Natural killer cell (primary cell): ENCODE measurements at regions of chr6 and their contacts with region 1.

Region 1: GRCh38 chr6:26270903-26271667 is 93.9 kb upstream of the BTN3A2 start:
- DNase-seq: peak; percentile 78 to 92
- ATAC-seq: peak in 2 of 3 donors; percentile 17 to 20
- H3K4me3 ChIP-seq: peak overlapping the region; percentile 62
- H3K4me3 Mint-ChIP-seq: no peak overlapping the region
- H3K27ac ChIP-seq: peak overlapping the region; percentile 92
- H3K27ac Mint-ChIP-seq: no peak overlapping the region
- H3K4me1 ChIP-seq: peaks cover 30% of the 10 kb centered on the region
- H3K4me1 Mint-ChIP-seq: peaks cover 14 to 21% of the 10 kb centered on the region in 2 donors
- H3K27me3 ChIP-seq: no peaks in the 10 kb centered on the region
- H3K27me3 Mint-ChIP-seq: no peaks in the 10 kb centered on the region
- CTCF ChIP-seq: no peak

Region 2: GRCh38 chr6:26103770-26104456 is 167.2 kb before region 1 on chr6:
- intact Hi-C with region 1: loop called (anchors 5 kb)
- DNase-seq: peak; percentile 86 to 95
- ATAC-seq: peak; percentile 87 to 96 (median 88)
- H3K4me3 ChIP-seq: peak overlapping the region; percentile 41
- H3K4me3 Mint-ChIP-seq: peak overlapping the region; percentile 90
- H3K27ac ChIP-seq: peak overlapping the region; percentile 84
- H3K27ac Mint-ChIP-seq: peak overlapping the region; percentile 98 to 99
- H3K4me1 ChIP-seq: peaks cover 10% of the 10 kb centered on the region
- H3K4me1 Mint-ChIP-seq: peaks cover 18% of the 10 kb centered on the region in 2 donors
- H3K27me3 ChIP-seq: no peaks in the 10 kb centered on the region
- H3K27me3 Mint-ChIP-seq: no peaks in the 10 kb centered on the region
- CTCF ChIP-seq: peak; percentile 41

Region 3: GRCh38 chr6:26193467-26194328 is 77.4 kb before region 1 on chr6:
- intact Hi-C with region 1: no loop called
- DNase-seq: no peak
- ATAC-seq: no peak
- H3K4me3 ChIP-seq: no peak overlapping the region
- H3K4me3 Mint-ChIP-seq: peak overlapping the region; percentile 2
- H3K27ac ChIP-seq: no peak overlapping the region
- H3K27ac Mint-ChIP-seq: peak overlapping the region; percentile 98 to 99
- H3K4me1 ChIP-seq: peaks cover 29% of the 10 kb centered on the region
- H3K4me1 Mint-ChIP-seq: peaks cover 37 to 40% of the 10 kb centered on the region in 2 donors
- H3K27me3 ChIP-seq: no peaks in the 10 kb centered on the region
- H3K27me3 Mint-ChIP-seq: no peaks in the 10 kb centered on the region
- CTCF ChIP-seq: no peak

Region 4: GRCh38 chr6:26234421-26235296 is 36.4 kb before region 1 on chr6:
- intact Hi-C with region 1: loop called (anchors 5 kb)
- DNase-seq: peak; percentile 64 to 86
- ATAC-seq: peak; percentile 73 to 84 (median 73)
- H3K4me3 ChIP-seq: peak overlapping the region; percentile 69
- H3K4me3 Mint-ChIP-seq: peak overlapping the region; percentile 91
- H3K27ac ChIP-seq: peak overlapping the region; percentile 92
- H3K27ac Mint-ChIP-seq: peak overlapping the region; percentile 91 to 98
- H3K4me1 ChIP-seq: peaks cover 23% of the 10 kb centered on the region
- H3K4me1 Mint-ChIP-seq: peaks cover 32 to 37% of the 10 kb centered on the region in 2 donors
- H3K27me3 ChIP-seq: no peaks in the 10 kb centered on the region
- H3K27me3 Mint-ChIP-seq: no peaks in the 10 kb centered on the region
- CTCF ChIP-seq: no peak

Region 5: DNA sequence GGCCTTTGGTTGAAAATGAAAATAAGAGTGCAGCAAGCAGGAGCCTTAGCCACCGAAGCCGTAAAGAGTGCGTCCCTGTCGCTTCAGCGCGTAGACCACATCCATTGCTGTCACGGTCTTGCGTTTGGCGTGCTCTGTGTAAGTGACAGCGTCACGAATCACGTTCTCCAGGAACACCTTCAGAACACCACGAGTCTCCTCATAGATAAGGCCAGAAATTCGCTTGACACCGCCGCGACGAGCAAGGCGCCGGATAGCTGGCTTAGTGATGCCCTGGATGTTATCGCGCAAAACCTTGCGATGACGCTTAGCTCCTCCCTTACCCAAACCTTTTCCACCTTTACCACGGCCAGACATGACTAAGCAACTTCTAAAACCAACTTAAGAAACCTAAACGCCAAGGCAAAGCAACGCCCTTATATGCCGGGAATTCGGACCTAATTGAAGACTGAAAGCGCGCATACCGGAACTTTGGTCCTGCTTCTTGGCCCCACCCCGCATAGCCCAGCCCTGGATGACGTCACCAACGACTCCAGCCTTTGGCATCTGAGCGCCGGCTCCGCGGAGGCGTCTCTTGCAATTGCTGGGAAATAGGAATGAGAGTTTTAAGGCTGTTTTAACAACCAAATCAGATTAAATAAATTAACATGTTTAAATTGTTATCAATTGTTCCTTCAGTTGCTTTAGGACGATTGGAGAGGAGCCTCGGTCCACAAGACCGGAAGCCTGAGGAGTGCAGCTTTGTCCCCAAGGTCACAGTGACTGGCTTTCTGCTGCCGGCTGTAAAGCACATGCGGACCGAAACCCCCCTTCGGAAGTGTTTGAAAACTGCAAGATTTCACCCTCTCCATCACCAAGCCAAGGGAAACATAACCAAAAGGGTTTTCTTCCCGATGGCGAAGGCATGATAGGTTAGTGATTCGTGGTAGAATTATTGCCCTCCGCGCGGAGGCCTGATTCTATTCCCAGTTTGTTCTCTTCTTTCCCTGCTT is 14.4 kb after region 1 on chr6:
- intact Hi-C with region 1: loop called (anchors 1 kb)
- DNase-seq: peak; percentile 83 to 98
- ATAC-seq: peak; percentile 76 to 93 (median 83)
- H3K4me3 ChIP-seq: peak overlapping the region; percentile 70
- H3K4me3 Mint-ChIP-seq: peak overlapping the region; percentile 95
- H3K27ac ChIP-seq: peak overlapping the region; percentile 97
- H3K27ac Mint-ChIP-seq: peak overlapping the region; percentile 98
- H3K4me1 ChIP-seq: peaks cover 17% of the 10 kb centered on the region
- H3K4me1 Mint-ChIP-seq: peaks cover 34 to 37% of the 10 kb centered on the region in 2 donors
- H3K27me3 ChIP-seq: no peaks in the 10 kb centered on the region
- H3K27me3 Mint-ChIP-seq: peaks cover 3 to 8% of the 10 kb centered on the region in 2 donors
- CTCF ChIP-seq: no peak